GM18951 (cell line): ENCODE measurements at regions of chr1 and their contacts with region 1.

Region 1: DNA sequence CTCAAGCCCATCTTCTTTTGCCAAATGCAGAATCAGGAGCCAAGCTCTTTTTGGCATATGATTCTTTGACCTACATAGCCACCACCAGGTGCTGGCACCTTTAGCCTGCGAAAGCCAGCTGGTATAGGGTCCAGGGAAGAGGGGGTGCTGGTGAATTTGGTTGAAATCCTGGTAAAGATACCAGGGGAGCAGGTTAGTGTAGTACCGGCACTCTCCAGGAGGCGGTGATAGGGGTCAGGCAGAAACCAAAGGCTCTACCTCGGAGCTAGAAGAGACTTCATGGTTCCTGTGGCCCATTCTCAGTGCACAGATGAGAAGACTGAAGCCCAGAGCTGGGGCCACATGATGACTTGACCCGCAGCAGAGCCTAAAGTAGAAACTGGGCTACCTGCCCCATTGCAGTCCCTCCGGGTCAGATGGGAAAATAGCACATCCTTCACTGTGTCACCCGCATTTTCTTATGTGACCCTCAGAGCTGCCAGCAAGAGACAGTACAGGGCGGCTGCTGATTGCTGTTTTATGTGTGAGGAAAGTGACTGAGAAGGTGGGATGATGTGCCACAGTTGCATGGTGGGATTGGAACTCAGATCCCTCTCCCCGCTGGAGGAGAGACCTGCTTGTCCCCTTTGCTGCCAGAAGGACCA is 36.0 kb upstream of the IL19 start:
- POLR2A ChIP-seq: no peak

Region 2: DNA sequence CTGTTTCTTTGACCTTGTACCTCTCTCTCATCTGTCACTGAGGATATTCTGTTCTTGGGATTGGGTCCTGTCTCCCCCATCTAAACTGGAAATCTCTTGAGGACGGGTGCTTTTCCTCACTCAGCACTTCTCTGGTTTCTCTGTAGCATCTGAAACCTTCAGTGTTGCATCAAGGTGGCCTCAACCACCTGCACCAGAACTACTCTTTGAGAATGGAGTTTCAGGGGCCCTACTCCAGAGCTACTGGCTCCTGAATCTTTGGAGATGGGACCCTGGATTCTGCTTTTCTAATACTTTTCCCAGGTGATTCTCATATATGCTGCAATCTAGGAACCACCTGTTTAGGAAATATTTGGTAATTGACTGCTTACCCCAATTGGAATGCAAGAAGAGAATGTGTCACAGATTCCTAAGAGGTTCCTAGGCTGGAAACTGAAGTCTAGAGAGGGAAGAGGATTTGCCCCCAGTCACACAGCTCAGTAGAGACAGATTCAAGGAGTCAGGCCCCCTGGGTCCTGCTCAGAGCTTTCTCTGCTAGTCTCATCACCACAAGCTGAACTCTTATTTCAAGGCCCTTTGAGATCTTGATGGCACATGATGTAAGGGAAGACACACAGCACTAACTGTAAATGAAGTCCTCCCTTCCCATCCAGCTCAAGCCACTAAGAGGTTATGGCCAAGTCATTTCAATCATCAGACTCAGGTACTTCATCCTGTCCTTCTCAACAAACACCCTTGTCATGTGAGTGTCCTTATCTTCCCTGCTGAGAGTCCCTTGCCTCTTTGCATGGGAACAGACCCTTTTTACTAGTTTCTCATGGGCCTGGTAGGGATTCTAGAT is 171.0 kb before region 1 on chr1:
- in situ Hi-C with region 1: no loop called
- POLR2A ChIP-seq: no peak

Region 3: GRCh38 chr1:206808615-206809014 is 74.0 kb after region 1 on chr1:
- in situ Hi-C with region 1: loop called (anchors 5 kb)
- POLR2A ChIP-seq: no peak

Region 4: DNA sequence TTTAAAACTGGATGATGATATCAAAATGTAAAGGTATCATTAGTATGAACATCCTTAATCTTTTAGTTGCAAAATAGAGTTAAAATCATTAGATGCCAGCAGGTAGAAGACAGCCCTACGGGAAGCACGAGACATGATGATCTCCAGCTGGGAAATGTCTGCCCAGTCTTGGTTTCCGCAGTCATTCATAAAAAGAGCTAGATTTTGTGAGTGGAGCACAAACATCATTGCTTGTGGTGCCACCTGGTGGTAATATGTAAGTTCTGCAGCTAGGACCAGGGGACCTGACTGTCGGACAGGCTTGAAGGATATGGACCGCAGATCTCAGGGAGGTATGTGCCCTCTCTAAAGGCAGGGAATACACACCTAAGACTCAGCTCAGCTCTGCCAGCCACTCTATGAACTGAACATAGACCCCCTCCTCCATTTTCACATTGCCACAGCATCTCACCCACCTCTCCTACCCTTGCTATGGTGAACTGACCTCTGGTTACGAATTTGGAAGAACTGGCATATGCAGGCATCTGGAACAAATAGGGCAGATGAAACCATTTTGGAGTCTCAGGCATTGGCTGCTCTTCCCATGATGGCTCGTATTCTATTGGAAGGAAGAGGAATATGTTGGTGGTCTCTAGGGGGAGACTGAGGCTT is 177.9 kb after region 1 on chr1:
- in situ Hi-C with region 1: loop called (anchors 5 kb)
- POLR2A ChIP-seq: no peak